Panc1 (cell line): ENCODE measurements at regions of chr6 and their contacts with region 1.

Region 1: GRCh38 chr6:34236131-34236996 is at the start of gene HMGA1:
- DNase-seq: no peak
- ATAC-seq: peak; percentile 78
- H3K4me3 ChIP-seq: peak within 1 kb of the TSS; percentile 73 to 78
- H3K27ac ChIP-seq: peak within 1 kb of the TSS; percentile 90
- H3K4me1 ChIP-seq: peaks cover 38% of the 10 kb centered on the region
- H3K27me3 ChIP-seq: no peaks in the 10 kb centered on the region
- CTCF ChIP-seq: no peak
- total RNA-seq, gene HMGA1: 444 TPM

Region 2: DNA sequence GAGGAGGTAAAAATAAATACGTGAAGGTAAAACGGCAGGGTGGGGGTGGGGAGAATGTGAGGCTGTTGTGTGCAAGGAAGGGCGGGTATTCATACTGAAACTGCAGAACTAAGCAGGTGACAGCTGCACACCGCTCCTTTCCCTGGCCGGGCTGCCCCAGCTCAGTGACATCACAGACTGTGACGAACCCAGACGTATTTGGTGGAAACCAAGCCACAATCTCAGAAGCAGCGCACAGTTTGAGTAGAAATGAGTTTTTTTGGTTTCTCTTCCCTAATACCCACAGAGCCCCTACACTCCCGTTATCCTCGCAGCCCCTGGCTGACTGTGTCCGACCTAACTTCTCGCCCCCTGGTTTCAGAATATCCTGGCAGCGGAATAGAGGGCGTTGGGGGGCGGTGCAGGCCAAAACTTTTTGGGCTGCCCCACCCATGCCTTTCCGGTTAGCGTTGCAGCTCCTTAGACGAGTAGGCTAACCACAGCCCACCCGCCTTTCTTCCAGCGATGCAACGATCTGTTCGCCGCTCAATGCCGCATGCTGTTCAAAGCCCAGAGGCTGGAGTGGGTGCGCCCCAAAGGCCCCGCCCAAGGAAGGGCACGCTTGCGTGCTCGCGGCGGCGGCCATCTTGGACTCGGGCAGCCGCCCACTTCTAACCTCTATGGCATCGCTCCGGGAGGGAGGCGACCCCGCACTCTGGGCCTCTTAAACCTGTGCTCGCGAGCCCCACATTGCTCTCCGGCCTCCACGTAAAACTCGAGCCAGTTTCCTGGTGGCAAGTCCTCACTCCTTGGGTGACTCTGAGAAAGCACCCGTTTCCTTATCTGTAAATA is 665.3 kb before region 1 on chr6:
- CTCF ChIA-PET with region 1: no interaction called
- POLR2A ChIA-PET with region 1: interaction called, 10 read pairs
- in situ Hi-C with region 1: no loop called
- intact Hi-C with region 1: no loop called
- DNase-seq: no peak
- ATAC-seq: peak; percentile 98
- H3K4me3 ChIP-seq: peak overlapping the region; percentile 65 to 78
- H3K27ac ChIP-seq: peak overlapping the region; percentile 85
- H3K4me1 ChIP-seq: peaks cover 3% of the 10 kb centered on the region
- H3K27me3 ChIP-seq: no peaks in the 10 kb centered on the region
- CTCF ChIP-seq: no peak

Region 3: GRCh38 chr6:34145161-34146020 is 91.0 kb before region 1 on chr6:
- CTCF ChIA-PET with region 1: no interaction called
- POLR2A ChIA-PET with region 1: no interaction called
- in situ Hi-C with region 1: no loop called
- intact Hi-C with region 1: no loop called
- DNase-seq: no peak
- ATAC-seq: peak; percentile 72
- H3K4me3 ChIP-seq: peak overlapping the region; percentile 44 to 46
- H3K27ac ChIP-seq: no peak overlapping the region
- H3K4me1 ChIP-seq: peaks cover 5% of the 10 kb centered on the region; the same call in 1 of the 2 replicates
- H3K27me3 ChIP-seq: no peaks in the 10 kb centered on the region; the same call in 1 of the 2 replicates
- CTCF ChIP-seq: peak; percentile 56

Region 4: DNA sequence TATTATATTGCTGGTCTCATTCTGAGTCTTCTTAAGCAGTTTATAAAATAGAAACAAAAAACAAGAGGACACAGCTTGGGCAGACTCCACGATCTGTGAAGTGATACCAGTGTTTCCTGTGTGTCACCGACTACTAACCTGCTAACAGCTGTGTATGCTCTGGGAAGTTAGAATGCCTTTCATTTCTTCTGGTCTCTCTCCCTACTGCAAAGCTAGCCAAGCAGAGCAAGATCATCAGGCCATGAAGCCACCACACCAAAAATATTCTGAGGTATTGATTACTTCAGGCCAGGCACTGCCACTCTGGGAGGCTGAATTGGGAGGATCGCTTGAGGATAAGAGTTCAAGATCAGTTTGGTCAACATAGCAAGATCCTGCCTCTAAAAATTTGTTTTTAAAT is 59.4 kb after region 1 on chr6:
- CTCF ChIA-PET with region 1: no interaction called
- POLR2A ChIA-PET with region 1: no interaction called
- in situ Hi-C with region 1: no loop called
- intact Hi-C with region 1: no loop called
- DNase-seq: no peak
- ATAC-seq: no peak
- H3K4me3 ChIP-seq: no peak overlapping the region
- H3K27ac ChIP-seq: no peak overlapping the region
- H3K4me1 ChIP-seq: no peaks in the 10 kb centered on the region
- H3K27me3 ChIP-seq: no peaks in the 10 kb centered on the region
- CTCF ChIP-seq: no peak